ENCODE measurements at regions of chr13 and their contacts with region 1.

Region 1: DNA sequence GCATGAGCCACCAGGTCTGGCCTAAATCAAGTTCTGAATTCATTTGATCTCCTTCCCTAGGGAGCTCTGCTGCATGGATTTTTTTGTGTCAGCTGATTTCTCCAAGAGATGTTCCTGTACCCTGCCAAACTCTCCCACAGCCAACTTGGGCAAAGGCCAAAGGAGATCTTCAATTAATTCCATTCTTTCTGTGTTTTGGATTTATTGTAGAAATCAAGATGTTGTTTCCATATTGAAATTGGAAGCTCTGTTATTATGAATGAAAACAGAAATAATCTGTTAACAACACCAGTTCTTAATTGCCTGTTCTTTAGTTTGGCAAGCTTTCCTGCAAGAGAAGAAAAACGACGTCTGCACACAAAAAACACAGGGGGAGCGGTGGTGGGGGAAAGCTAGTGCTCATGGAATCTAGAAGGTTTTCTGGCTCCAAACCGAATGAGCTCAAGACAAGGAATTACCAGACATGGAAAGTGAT is 86.5 kb upstream of the ABCC4 start:
- ATAC-seq: no peak
- H3K4me3 ChIP-seq: no peak overlapping the region
- H3K27ac ChIP-seq: no peak overlapping the region
- H3K4me1 ChIP-seq: no peaks in the 10 kb centered on the region

Region 2: DNA sequence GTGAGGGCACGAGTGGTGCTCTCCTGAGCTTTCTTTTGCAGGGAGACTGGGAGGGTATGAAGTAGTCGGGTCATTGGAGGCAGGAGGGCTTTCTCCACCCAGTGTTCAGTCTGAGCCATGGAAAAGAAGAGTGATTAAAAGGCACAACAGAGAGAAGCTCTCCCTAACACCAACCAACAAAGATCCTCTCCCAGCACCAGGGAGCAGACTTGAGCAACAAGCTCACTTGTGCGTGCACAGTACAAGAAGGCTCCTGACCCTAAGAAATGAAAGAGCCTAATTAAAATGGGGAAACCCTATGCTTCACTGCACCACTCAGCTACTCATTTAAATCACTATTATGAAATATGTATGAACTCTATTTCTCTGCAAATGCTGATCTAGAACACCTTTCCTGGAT is 399.1 kb before region 1 on chr13:
- in situ Hi-C with region 1: loop called in 1 of 9 experiments (anchors 25 kb)
- ATAC-seq: peak in 3 of 8 experiments; percentile 60 to 71 (median 63)
- H3K4me3 ChIP-seq: no peak overlapping the region
- H3K27ac ChIP-seq: no peak overlapping the region
- H3K4me1 ChIP-seq: peaks cover 0 to 8% of the 10 kb centered on the region in 2 donors

Region 3: DNA sequence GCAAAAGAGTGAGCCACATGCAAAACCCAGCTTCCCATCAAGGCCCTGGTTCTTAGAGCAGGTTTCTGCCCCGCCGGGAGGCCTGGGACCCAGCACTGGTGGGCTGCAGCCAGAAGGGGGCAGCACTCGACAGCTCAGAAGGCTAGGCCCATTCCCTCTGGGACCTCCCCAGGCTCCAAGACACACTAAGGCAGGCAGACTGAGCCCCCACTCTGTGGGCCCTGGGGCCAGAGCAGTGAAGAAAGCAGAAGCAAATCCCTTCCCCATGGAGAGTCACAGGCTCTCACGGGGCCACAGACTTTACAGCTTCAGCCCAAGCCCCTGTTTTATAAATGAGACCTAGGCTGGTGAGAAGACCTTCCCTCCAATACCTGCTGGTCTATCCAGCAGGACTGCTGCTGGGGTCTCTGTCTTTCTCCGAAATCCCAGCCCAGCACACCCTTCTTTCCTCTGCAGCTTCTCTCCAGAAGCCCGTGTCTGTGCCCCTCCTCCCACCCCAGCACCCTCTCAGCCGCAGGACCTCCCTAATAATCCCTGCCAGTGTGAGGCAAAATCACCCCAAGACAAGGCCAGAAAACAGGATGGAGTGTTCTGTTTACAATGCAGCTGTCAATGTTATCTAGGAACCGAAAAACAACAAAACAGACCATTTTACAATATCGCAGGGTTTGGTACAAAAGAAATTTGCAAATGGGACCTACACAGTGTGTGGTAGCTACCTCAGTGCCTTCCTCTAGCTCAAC is 195.8 kb before region 1 on chr13:
- in situ Hi-C with region 1: loop called in 5 of 9 experiments (anchors 10 to 25 kb)
- ATAC-seq: peak; percentile 83 to 99 (median 97)
- H3K4me3 ChIP-seq: no peak overlapping the region
- H3K27ac ChIP-seq: no peak overlapping the region
- H3K4me1 ChIP-seq: no peaks in the 10 kb centered on the region